WTC11 (cell line): ENCODE measurements at regions of chr6 and their contacts with region 1.

Region 1: DNA sequence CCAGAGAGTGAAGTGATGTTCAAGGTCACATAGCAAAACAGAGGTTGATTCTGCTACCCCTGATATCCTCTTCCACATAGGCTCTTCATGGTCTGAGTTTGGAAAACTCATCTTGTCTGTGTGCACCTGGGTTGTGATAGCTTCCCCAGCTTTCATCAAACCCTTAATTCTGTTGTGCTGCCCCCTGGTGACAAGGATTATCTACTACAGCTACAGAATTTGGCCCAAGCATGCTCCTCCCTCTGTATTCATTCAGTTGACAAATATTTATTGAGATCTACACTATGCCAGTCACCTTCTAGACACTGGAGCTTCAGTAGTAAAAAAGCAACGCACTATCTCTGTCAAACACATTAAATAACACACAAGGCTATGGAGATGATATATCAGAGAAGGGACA is 50.4 kb downstream of the SMPDL3A start:
- DNase-seq: peak; percentile 71
- ATAC-seq: peak; percentile 94
- H3K4me3 Mint-ChIP-seq: no peak overlapping the region
- H3K27ac Mint-ChIP-seq: no peak overlapping the region
- H3K4me1 Mint-ChIP-seq: peaks cover 22% of the 10 kb centered on the region
- H3K27me3 Mint-ChIP-seq: peaks cover 10% of the 10 kb centered on the region; the same call in 1 of the 2 replicates
- CTCF ChIP-seq: peak; percentile 60

Region 2: GRCh38 chr6:122730775-122731386 is 108.6 kb before region 1 on chr6:
- CTCF ChIA-PET with region 1: interaction called, 74 read pairs
- POLR2A ChIA-PET with region 1: no interaction called
- DNase-seq: no peak
- ATAC-seq: no peak; the same call in 1 of the 2 replicates
- H3K4me3 Mint-ChIP-seq: no peak overlapping the region
- H3K27ac Mint-ChIP-seq: no peak overlapping the region
- H3K4me1 Mint-ChIP-seq: peaks cover 37% of the 10 kb centered on the region
- H3K27me3 Mint-ChIP-seq: no peaks in the 10 kb centered on the region
- CTCF ChIP-seq: peak; percentile 62

Region 3: DNA sequence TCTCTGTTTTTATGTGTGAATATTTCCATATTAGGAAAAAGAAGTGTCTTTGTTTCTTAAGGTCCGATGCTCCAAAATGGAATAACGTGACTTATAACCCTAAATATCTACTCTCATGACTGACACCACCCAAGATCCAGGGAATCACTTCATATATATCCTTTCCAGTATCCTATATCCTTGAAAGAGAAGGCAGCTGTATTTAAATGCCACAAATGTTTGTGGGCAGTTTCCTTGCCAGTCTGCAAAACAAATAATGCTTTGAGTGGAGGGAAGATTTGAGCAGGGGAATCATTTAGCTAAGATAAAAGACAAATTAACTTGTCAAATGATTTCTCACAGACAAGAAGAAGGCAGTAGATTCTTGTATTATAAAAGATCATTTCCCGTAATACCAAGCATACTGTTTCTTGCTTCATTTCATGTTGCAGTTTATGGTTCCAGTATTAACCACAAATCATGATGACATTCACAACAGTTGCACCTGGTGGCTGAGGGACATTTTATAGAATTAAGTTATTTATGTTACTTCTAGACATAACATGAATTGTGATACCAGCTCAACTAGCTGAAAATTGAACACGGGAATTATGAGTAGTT is 89.9 kb before region 1 on chr6:
- CTCF ChIA-PET with region 1: interaction called, 47 read pairs
- POLR2A ChIA-PET with region 1: no interaction called
- DNase-seq: no peak
- ATAC-seq: no peak
- H3K4me3 Mint-ChIP-seq: no peak overlapping the region
- H3K27ac Mint-ChIP-seq: no peak overlapping the region
- H3K4me1 Mint-ChIP-seq: peaks cover 27% of the 10 kb centered on the region
- H3K27me3 Mint-ChIP-seq: peaks cover 84% of the 10 kb centered on the region
- CTCF ChIP-seq: no peak

Region 4: GRCh38 chr6:122778985-122779661 is 60.4 kb before region 1 on chr6:
- CTCF ChIA-PET with region 1: interaction called, 12 read pairs
- POLR2A ChIA-PET with region 1: no interaction called
- DNase-seq: peak; percentile 45
- ATAC-seq: peak; percentile 99
- H3K4me3 Mint-ChIP-seq: peak overlapping the region; percentile 48
- H3K27ac Mint-ChIP-seq: peak overlapping the region; percentile 80
- H3K4me1 Mint-ChIP-seq: peaks cover 35% of the 10 kb centered on the region
- H3K27me3 Mint-ChIP-seq: peaks cover 18% of the 10 kb centered on the region
- CTCF ChIP-seq: no peak

Region 5: GRCh38 chr6:122869437-122870024 is 30.1 kb after region 1 on chr6:
- CTCF ChIA-PET with region 1: interaction called, 16 read pairs
- POLR2A ChIA-PET with region 1: no interaction called
- DNase-seq: peak; percentile 22
- ATAC-seq: peak; percentile 96
- H3K4me3 Mint-ChIP-seq: no peak overlapping the region
- H3K27ac Mint-ChIP-seq: no peak overlapping the region
- H3K4me1 Mint-ChIP-seq: peaks cover 15% of the 10 kb centered on the region
- H3K27me3 Mint-ChIP-seq: no peaks in the 10 kb centered on the region
- CTCF ChIP-seq: peak; percentile 50; the same call in 1 of the 2 replicates

Region 6: GRCh38 chr6:122903266-122903915 is 63.9 kb after region 1 on chr6:
- CTCF ChIA-PET with region 1: no interaction called
- POLR2A ChIA-PET with region 1: no interaction called
- DNase-seq: no peak
- ATAC-seq: no peak
- H3K4me3 Mint-ChIP-seq: no peak overlapping the region
- H3K27ac Mint-ChIP-seq: no peak overlapping the region
- H3K4me1 Mint-ChIP-seq: peaks cover 5% of the 10 kb centered on the region; the same call in 1 of the 2 replicates
- H3K27me3 Mint-ChIP-seq: no peaks in the 10 kb centered on the region
- CTCF ChIP-seq: no peak